Heart left ventricle (tissue), 16 donors: ENCODE measurements at regions of chr3 and their contacts with region 1.

Region 1: DNA sequence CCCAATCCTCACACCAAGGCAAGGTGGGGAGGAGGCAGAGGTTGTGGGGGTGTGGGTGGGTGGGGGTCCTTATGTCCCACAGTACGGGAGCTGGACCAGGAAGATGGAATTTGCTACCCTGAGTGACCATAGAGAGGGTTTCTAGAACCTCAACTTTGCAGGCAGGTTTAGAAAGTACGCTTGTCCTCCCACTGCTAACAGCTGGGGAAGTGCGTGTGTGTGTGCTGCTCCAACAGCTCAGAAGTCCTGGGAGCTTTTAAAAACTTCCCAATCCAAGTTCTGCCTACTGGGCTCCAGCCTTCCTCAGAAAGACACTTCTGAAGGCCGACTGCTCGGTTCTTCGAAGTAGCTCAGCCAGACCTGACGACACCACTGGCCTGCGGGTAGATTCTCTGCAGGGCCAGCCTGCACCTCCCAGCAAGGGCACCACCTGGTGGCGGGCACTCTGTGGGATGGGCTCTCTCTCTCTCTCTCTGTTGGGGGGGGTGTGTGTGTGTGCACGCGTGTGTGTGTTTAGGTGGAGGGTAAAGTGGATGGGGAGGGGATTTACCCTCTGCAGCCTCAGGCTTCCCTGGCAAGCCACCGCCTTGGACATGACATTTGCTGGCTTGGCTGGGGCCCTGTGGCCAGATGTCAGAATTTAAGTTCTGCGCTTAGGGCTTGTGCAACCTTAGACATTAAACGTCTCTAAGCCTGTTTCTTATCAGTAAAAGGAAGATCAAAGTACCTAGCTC is 15.6 kb downstream of the TMEM158 start:
- DNase-seq: peak; percentile 77 to 91 (median 87)
- ATAC-seq: peak; percentile 81 to 98 (median 96)
- H3K4me3 ChIP-seq: no peak overlapping the region
- H3K27ac ChIP-seq: peak overlapping the region in 1 of 12 donors; percentile 69
- H3K4me1 ChIP-seq: peaks cover 0 to 9% (median 0%) of the 10 kb centered on the region in 12 donors
- H3K27me3 ChIP-seq: peaks cover 0 to 2% (median 0%) of the 10 kb centered on the region in 9 donors
- CTCF ChIP-seq: peak; percentile 48 to 77 (median 67)
- POLR2A ChIP-seq: no peak

Region 2: GRCh38 chr3:45499529-45499928 is 289.1 kb after region 1 on chr3:
- intact Hi-C with region 1: loop called in 3 of 10 experiments (anchors 5 to 10 kb)
- DNase-seq: no peak
- ATAC-seq: no peak
- H3K4me3 ChIP-seq: no peak overlapping the region
- H3K27ac ChIP-seq: no peak overlapping the region
- H3K4me1 ChIP-seq: peaks cover 0 to 9% (median 0%) of the 10 kb centered on the region in 12 donors
- H3K27me3 ChIP-seq: no peaks in the 10 kb centered on the region
- CTCF ChIP-seq: peak in 11 of 12 donors; percentile 23 to 56 (median 39)
- POLR2A ChIP-seq: no peak